Activated T-helper 2 cell treated with anti-CD3 and anti-CD28 coated beads, Interferon-gamma antibody, Interleukin-2, Interleukin-4, amounts not matched to agents 10 μg/mL and 5 μg/mL and 100 μg/mL, durations not matched to agents 14 hours and 24 hours and 36 hours (primary cell): ENCODE measurements at regions of chr11 and their contacts with region 1.

Region 1: DNA sequence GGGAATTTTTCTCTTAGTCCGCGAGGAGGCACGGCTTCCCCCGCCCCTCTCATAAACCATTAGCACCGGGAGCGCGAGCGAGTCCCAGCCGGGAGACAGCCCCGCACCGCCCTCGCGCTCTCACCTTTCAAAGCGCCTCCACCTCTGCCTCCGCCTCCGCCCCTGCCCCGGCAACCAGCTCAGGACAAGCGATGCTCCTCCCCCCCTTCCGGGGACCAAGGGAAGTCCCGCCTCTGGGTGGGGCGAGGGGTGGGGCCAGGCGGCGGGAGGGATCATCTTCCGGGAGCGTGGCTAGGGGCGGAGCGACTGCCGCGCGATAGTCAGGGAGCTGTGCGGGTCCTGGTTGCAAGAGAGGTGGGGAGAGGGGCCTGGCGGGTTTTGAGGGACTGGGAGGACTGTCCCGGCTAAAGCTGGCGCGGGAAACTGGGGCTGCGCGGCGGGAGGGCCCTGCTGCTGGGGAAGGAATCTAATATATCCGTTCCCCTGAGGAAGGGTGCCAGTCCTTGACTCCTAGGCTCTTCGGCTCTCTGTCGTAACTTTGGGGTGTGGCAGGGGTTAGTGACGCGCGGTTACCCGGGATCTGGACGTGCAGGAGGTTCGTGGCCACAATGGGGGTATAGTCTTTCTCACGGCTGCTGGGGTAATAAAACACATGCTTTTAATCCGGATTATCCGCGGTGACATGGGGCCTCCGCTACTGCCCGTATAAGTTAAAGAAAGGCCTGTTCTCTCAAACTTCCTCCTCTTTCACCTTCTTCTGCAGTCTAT is at the starts of genes CCDC82 and JRKL:
- DNase-seq: peak; percentile 96
- H3K4me3 Mint-ChIP-seq: peak within 1 kb of the TSS; percentile 94
- H3K27ac Mint-ChIP-seq: peak within 1 kb of the TSS; percentile 86
- H3K4me1 Mint-ChIP-seq: peaks cover 50% of the 10 kb centered on the region
- H3K27me3 Mint-ChIP-seq: no peaks in the 10 kb centered on the region
- total RNA-seq, gene CCDC82: 35.4 and 38.6 TPM in 2 replicates
- total RNA-seq, gene JRKL: 11.8 and 12.9 TPM in 2 replicates

Region 2: DNA sequence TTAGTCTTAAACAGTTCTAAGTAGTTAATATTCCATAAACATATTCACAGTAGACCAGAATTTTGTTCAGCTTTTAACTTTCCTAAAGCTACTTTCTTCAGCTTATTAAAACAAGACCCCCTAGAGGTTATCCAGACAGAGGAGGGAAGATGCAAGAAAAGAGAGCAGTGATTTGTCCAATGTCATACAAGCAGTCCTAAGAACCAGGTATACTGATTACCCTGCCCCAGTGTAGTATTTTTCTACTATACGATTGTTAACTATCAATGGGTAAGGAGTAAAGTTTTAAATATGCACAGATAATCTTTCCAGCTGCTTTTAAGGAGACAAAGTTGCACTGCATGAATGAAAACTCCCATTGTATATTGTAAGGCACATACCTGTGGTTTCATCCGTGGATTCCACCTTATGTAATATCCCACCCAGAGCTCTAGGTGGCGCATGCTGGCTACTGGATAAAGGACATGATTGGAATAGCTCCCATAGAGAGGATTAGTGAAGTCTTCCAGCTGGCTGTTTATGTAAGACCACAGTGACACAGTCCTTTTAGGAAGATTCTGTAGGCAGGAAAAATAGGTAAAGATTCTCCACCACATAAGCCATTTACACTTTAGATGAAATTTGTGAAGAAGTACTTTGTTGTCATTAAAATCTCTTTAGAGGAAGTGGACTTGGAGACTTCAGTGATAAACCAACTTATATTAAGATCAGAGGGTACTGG is 554.0 kb before region 1 on chr11:
- intact Hi-C with region 1: loop called (anchors 1 kb)
- DNase-seq: peak; percentile 27
- H3K4me3 Mint-ChIP-seq: no peak overlapping the region
- H3K27ac Mint-ChIP-seq: no peak overlapping the region
- H3K4me1 Mint-ChIP-seq: no peaks in the 10 kb centered on the region
- H3K27me3 Mint-ChIP-seq: no peaks in the 10 kb centered on the region

Region 3: GRCh38 chr11:95923728-95924413 is 466.0 kb before region 1 on chr11 and contains the start of gene MTMR2:
- intact Hi-C with region 1: loop called (anchors 1 kb)
- DNase-seq: peak; percentile 39
- H3K4me3 Mint-ChIP-seq: peak within 1 kb of the TSS; percentile 100
- H3K27ac Mint-ChIP-seq: peak within 1 kb of the TSS; percentile 99
- H3K4me1 Mint-ChIP-seq: peaks cover 23% of the 10 kb centered on the region
- H3K27me3 Mint-ChIP-seq: peaks cover 6% of the 10 kb centered on the region
- total RNA-seq, gene MTMR2: 41.7 and 45.4 TPM in 2 replicates

Region 4: DNA sequence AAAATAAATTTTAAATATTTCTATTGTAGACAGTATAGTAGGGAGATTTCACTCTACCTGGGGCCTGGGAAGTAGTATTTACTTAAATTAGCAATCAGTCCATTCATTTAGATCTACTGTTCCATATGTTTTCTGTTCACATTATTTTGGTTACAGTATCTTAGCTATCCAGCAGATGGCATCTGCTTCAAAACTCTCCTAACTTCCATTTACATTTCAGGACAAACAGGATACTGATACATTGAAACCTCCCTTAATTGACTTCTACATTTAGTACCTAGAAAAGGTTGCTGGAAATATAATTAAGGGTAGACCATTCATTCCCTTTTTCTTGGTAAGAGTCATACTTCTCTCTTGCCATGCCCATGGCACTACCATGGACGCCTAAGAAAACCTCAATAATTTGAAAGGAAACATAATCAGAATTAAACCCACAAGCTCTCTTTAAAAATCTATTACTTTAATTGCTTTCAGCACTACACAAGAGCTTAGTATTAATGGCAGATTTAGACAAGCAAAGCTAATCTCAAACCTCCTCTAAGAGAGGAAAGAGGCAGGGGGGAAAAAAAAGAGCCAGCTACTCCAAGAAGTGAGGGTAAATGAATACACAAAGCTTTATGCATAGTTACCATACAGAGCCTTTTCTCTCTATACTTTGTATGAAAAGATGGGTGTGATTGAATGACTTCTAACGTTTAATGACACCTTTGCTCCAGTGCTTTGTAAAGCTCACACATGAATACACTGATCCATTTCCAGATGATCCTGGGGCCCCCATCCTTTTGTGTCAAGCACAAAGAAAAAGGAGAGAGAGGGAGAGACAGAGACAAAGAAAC is 334.8 kb before region 1 on chr11:
- intact Hi-C with region 1: loop called (anchors 2 kb)
- DNase-seq: no peak
- H3K4me3 Mint-ChIP-seq: no peak overlapping the region
- H3K27ac Mint-ChIP-seq: no peak overlapping the region
- H3K4me1 Mint-ChIP-seq: peaks cover 53% of the 10 kb centered on the region
- H3K27me3 Mint-ChIP-seq: no peaks in the 10 kb centered on the region

Region 5: DNA sequence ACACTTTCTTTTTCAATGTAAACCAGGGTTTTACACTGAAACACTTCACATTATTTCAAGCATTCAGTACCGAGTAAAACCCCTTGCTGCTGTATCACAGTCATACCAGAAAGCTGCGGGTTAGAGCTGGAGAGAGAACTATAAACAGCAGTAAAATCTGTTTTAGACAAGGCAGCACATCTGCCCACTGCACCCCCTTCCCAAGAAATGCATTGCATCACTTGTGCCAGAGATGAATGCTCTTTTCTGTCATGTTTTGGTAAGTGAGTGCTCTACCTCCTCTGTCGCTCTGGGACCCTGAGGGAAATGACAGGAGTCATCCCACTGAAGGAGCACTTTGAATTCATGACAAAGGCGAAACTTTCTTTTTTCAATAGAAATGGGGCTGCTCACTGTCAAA is 154.2 kb before region 1 on chr11:
- intact Hi-C with region 1: loop called (anchors 1 kb)
- DNase-seq: peak; percentile 52
- H3K4me3 Mint-ChIP-seq: peak overlapping the region; percentile 65
- H3K27ac Mint-ChIP-seq: peak overlapping the region; percentile 89
- H3K4me1 Mint-ChIP-seq: peaks cover 36% of the 10 kb centered on the region
- H3K27me3 Mint-ChIP-seq: no peaks in the 10 kb centered on the region

Region 6: DNA sequence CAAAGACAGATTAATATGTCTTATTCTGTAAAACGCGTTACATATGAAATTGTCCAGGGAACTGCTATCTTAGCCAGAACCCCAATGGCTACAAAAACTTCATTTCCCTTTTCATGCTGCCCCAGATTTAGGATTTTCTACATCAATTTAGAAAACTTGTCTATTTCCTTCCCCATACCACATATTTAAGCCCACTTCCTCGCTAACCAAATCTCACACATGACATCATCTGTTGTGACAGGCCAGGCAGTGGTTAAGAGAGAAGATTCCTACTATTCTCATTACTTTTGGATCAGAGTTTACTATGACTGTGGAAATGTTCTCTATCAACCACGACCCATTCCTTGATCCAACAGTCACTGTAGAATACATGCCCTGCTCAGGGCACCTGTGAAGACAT is 16.1 kb before region 1 on chr11:
- intact Hi-C with region 1: loop called (anchors 2 kb)
- DNase-seq: no peak
- H3K4me3 Mint-ChIP-seq: no peak overlapping the region
- H3K27ac Mint-ChIP-seq: no peak overlapping the region
- H3K4me1 Mint-ChIP-seq: peaks cover 4% of the 10 kb centered on the region
- H3K27me3 Mint-ChIP-seq: no peaks in the 10 kb centered on the region

Region 7: DNA sequence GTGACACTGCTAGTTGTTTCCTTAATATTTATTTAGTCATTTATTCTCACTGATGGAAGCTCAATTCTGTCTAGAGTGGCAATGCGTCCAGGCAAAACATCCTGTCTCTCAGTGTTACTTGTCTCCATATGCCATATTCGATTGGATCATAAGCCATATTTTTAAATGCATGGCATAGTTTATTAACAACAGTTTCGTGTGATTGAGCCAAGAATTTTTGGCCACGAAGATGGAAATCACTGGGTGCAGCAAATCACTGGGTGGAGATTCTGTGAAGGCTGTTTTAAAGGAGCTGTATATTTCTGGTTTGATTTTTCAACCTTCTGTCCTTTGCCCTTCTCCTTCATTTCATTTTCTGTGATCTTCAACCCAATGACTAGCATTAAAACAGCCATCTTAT is 205.1 kb after region 1 on chr11:
- intact Hi-C with region 1: no loop called
- DNase-seq: no peak
- H3K4me3 Mint-ChIP-seq: no peak overlapping the region
- H3K27ac Mint-ChIP-seq: no peak overlapping the region
- H3K4me1 Mint-ChIP-seq: no peaks in the 10 kb centered on the region
- H3K27me3 Mint-ChIP-seq: no peaks in the 10 kb centered on the region